Calu3 (cell line): ENCODE measurements at regions of chr11 and their contacts with region 1.

Region 1: DNA sequence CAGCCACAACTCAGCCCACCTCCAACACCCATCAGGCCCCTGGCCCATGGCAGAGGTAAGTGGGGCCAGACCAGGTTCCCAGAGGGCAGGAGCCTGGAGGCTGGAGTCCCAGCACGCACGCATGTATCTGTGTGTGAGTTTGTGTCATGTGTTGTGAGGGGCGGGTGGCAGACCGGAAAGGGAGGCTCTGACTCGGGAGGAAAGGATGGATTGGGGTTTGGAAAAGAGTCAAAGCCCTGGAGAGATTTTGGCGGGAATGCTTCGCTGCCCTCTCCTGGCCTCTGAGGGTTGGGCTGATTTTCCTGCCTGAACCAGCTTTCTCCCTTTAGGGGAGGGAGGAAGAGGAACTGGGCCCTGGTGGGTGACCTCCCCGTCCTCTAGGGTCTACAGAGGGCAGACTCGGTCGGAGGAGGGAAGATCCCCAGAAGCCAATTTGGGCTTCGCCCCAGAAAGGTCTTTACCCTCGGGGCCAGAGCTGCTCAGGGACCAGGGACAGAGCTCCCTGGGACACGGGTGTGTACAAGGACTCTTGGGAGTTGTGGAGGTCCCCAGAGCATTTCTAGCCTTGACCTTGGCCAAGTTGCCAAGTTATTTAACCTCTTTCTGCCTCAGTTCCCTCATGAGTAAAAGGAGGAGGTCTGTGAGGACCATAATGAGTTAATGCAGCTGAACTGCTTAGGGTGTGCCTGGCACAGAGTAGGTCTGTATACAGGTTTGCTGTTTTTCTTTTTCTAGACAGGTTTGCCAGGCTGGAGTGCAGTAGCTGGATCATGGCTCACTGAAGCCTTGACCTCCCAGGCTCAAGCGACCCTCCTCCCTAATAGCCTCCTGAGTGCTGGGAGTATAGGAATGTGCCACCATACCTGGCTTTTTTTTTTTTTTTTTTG is 6.9 kb downstream of the C11orf68 start:
- DNase-seq: peak; percentile 49
- H3K4me3 Mint-ChIP-seq: no peak overlapping the region
- H3K27ac Mint-ChIP-seq: peak overlapping the region; percentile 48
- H3K4me1 Mint-ChIP-seq: peaks cover 61% of the 10 kb centered on the region
- H3K27me3 Mint-ChIP-seq: no peaks in the 10 kb centered on the region
- CTCF ChIP-seq: no peak

Region 2: GRCh38 chr11:65988791-65989592 is 77.1 kb after region 1 on chr11:
- CTCF ChIA-PET with region 1: no interaction called
- intact Hi-C with region 1: no loop called
- DNase-seq: peak; percentile 90
- H3K4me3 Mint-ChIP-seq: no peak overlapping the region
- H3K27ac Mint-ChIP-seq: no peak overlapping the region
- H3K4me1 Mint-ChIP-seq: no peaks in the 10 kb centered on the region
- H3K27me3 Mint-ChIP-seq: no peaks in the 10 kb centered on the region
- CTCF ChIP-seq: peak; percentile 84

Region 3: GRCh38 chr11:66011239-66011784 is 99.4 kb after region 1 on chr11:
- CTCF ChIA-PET with region 1: no interaction called
- intact Hi-C with region 1: no loop called
- DNase-seq: peak; percentile 87
- H3K4me3 Mint-ChIP-seq: peak overlapping the region; percentile 57
- H3K27ac Mint-ChIP-seq: peak overlapping the region; percentile 63
- H3K4me1 Mint-ChIP-seq: peaks cover 29% of the 10 kb centered on the region
- H3K27me3 Mint-ChIP-seq: no peaks in the 10 kb centered on the region
- CTCF ChIP-seq: no peak

Region 4: GRCh38 chr11:66283387-66284105 is 371.6 kb after region 1 on chr11:
- CTCF ChIA-PET with region 1: interaction called, 10 read pairs
- intact Hi-C with region 1: no loop called
- DNase-seq: no peak
- H3K4me3 Mint-ChIP-seq: no peak overlapping the region
- H3K27ac Mint-ChIP-seq: no peak overlapping the region
- H3K4me1 Mint-ChIP-seq: peaks cover 15% of the 10 kb centered on the region
- H3K27me3 Mint-ChIP-seq: peaks cover 28% of the 10 kb centered on the region
- CTCF ChIP-seq: peak; percentile 27